WTC11 (cell line): ENCODE measurements at regions of chr12 and their contacts with region 1.

Region 1: DNA sequence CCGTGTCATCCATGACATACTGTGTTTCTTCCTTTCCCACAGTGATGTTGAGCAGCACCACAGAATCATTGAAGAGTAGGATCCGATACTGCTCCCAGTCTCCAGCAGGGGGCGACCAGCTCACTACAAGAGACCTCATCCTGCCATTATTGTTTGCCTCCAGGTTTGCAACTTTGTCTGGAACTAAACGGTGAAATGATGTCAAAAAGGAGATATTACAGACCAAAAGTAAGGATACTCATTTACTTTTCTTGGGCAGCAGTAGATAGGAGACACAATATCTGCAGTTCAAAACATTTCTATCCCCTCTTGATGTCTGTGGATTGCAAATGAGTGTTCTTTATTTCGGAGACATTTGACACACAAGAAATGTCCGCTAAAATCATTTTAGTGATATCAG is 47.2 kb downstream of the PTPRB start:
- DNase-seq: peak; percentile 81
- ATAC-seq: peak; percentile 98
- H3K4me3 Mint-ChIP-seq: no peak overlapping the region
- H3K27ac Mint-ChIP-seq: peak overlapping the region; percentile 46; the same call in 1 of the 2 replicates
- H3K4me1 Mint-ChIP-seq: peaks cover 10% of the 10 kb centered on the region
- H3K27me3 Mint-ChIP-seq: no peaks in the 10 kb centered on the region; the same call in 1 of the 2 replicates
- CTCF ChIP-seq: peak; percentile 83

Region 2: GRCh38 chr12:70706611-70707010 is 116.6 kb after region 1 on chr12:
- CTCF ChIA-PET with region 1: no interaction called
- POLR2A ChIA-PET with region 1: no interaction called
- DNase-seq: no peak
- ATAC-seq: no peak
- H3K4me3 Mint-ChIP-seq: no peak overlapping the region
- H3K27ac Mint-ChIP-seq: no peak overlapping the region
- H3K4me1 Mint-ChIP-seq: peaks cover 26% of the 10 kb centered on the region
- H3K27me3 Mint-ChIP-seq: no peaks in the 10 kb centered on the region
- CTCF ChIP-seq: no peak

Region 3: DNA sequence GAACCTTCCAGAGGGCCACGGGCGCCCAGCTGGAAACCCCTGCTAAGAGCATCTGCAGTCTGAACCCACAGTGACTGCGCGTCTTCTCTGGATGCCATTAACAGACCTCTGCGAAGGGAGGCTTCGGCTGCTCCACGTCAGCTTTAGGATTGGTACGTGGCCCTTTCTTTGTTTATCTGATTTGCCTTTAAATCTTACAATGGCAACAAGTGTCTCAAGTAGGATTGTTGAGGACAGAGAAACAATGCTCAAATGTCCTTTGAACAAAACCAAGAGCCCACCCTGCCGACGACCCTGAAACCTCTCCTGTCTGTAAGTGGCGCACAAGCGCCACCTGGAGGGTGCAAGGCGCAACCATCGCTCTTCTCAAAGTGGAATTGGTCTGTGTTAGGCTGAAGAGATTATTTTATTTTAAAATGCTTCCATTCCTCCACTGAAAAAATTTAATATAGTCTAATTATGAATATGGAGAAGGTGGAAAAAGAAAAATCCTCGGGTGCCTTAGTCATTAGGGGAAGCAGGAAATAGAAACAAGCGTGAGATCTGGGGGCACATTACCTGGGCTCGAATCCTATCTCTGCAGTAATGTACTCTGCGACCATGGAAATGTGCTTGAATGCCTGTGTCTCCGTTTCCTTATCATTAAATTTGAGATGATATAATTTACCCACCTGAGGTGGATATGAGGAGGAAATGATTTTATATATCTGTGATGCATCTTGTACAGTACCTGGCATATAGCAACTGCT is 129.8 kb after region 1 on chr12:
- CTCF ChIA-PET with region 1: interaction called, 12 read pairs
- POLR2A ChIA-PET with region 1: no interaction called
- DNase-seq: peak; percentile 67
- ATAC-seq: peak; percentile 75
- H3K4me3 Mint-ChIP-seq: peak overlapping the region; percentile 48
- H3K27ac Mint-ChIP-seq: peak overlapping the region; percentile 84
- H3K4me1 Mint-ChIP-seq: peaks cover 70% of the 10 kb centered on the region
- H3K27me3 Mint-ChIP-seq: no peaks in the 10 kb centered on the region
- CTCF ChIP-seq: peak; percentile 90